Heart right ventricle (tissue), 16 donors: ENCODE measurements at regions of chr11 and their contacts with region 1.

Region 1: DNA sequence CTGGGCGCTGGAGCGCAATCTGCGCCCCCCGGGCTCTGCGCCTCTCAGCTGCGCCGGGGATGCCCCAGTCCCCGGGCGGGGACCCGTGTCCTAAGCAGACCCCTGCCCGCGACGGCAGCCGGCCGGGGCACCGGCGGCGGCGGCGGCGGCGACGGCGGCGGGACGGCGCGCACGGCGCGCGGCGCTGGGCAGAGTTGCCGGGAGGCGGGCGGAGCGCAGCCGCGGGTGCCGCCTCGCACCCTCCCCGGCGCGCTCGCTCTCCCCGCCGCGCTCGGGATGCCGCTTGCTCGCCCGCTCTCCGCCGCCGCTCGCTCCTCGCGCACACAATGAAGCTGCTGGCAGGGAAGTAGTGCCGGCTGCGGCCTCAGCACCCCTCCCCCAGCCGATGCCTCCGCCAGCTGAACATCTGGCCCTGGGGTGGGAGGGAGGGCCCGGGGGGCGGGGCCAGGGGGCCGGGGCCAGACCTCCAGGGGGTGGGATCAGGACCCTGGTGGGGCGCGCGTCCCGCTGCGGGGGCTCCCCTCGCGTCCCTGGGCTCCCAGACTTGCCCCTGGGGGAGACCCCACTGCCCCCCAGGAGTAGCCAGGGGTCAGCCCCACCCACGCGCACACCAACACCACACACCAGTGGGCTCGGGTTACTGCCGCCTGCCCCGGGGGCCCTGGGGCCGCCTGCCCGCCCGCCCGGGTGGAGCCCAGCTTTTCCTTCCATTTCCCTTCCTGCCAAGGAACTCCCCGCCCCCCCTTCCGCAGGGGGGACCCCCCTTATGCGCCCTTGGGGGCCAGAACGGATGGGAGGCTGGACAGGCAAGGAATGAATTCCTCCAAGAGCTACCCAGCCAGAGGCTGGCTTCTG is at the start of gene RCOR2:
- DNase-seq: peak; percentile 83 to 86
- ATAC-seq: peak; percentile 24 to 50 (median 38)
- H3K4me3 ChIP-seq: peak within 1 kb of the TSS; percentile 39 to 67 (median 60)
- H3K27ac ChIP-seq: peak within 1 kb of the TSS; percentile 83 to 97 (median 94)
- H3K4me1 ChIP-seq: peaks cover 39 to 61% (median 54%) of the 10 kb centered on the region in 9 donors
- H3K27me3 ChIP-seq: peaks cover 0 to 47% (median 0%) of the 10 kb centered on the region in 7 donors
- CTCF ChIP-seq: no peak
- total RNA-seq, gene RCOR2: 1.1 to 8.4 (median 5.0) TPM

Region 2: DNA sequence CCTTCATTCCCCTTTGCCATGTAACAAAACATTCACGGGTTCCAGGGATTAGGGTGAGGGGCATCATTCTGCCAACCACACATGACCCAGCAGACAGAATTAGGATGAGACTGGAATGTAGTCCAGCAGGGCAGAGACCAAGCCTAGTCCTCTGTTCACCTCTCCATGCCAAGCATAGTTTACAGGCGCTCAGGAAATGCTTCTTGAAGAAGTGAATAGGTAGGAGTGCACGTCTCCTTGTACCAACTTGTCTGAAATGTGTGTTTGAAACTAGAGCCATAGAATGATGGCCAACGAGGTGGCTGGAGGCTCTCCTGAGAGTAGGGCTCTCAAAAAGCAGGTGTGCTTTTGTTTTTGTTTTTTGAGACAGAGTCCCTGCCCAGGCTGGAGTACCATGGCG is 95.7 kb before region 1 on chr11:
- intact Hi-C with region 1: no loop called
- DNase-seq: no peak
- ATAC-seq: no peak
- H3K4me3 ChIP-seq: no peak overlapping the region
- H3K27ac ChIP-seq: no peak overlapping the region
- H3K4me1 ChIP-seq: peaks cover 0 to 4% (median 0%) of the 10 kb centered on the region in 9 donors
- H3K27me3 ChIP-seq: no peaks in the 10 kb centered on the region
- CTCF ChIP-seq: no peak

Region 3: DNA sequence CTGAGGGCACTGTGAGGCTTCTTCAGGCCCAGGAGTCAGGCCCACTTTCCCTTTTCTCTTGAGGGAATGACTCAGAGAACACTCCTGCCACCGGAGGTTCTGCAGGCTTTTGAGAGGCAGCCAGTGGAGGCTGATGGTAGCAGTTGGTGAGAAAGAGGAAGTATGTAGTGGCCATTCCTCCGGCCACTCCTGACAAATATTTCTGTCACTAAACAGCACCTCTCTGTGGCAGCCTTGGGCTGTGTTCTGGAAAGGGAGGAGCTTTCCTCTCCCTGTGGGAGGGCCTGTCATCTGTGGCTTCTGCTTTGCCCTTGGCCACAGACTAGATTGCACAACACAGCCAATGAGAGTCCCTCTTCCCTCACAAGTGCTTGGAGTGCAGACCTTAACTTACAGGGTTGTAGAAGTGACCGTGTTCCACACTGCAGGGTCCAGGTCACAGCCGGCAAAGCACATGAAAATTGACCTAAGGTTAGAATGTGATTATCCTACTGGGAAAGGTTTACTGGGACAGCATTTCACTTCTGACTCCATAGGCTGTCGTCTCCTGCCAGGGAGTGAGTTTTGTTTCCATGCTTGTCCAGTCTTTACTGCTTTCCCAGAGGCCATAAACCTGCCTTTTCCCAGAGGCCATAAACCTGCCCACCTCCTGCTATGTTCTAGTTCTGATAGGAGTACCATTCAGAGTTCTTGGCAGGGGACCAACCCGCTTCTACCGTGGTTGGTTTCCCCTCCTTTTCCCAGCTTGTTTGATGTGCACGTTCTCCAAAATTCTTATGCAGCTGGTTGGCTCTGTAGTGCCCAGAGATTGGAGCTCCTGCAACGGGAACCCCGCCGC is 44.9 kb before region 1 on chr11:
- intact Hi-C with region 1: loop called in 2 of 10 experiments (anchors 2 to 5 kb)
- DNase-seq: peak; percentile 55 to 89
- ATAC-seq: peak; percentile 92 to 97 (median 96)
- H3K4me3 ChIP-seq: peak overlapping the region in 4 of 10 donors; percentile 5 to 27 (median 12)
- H3K27ac ChIP-seq: peak overlapping the region; percentile 25 to 90 (median 79)
- H3K4me1 ChIP-seq: peaks cover 35 to 97% (median 88%) of the 10 kb centered on the region in 9 donors
- H3K27me3 ChIP-seq: no peaks in the 10 kb centered on the region
- CTCF ChIP-seq: peak in 8 of 9 donors; percentile 30 to 78 (median 56)

Region 4: DNA sequence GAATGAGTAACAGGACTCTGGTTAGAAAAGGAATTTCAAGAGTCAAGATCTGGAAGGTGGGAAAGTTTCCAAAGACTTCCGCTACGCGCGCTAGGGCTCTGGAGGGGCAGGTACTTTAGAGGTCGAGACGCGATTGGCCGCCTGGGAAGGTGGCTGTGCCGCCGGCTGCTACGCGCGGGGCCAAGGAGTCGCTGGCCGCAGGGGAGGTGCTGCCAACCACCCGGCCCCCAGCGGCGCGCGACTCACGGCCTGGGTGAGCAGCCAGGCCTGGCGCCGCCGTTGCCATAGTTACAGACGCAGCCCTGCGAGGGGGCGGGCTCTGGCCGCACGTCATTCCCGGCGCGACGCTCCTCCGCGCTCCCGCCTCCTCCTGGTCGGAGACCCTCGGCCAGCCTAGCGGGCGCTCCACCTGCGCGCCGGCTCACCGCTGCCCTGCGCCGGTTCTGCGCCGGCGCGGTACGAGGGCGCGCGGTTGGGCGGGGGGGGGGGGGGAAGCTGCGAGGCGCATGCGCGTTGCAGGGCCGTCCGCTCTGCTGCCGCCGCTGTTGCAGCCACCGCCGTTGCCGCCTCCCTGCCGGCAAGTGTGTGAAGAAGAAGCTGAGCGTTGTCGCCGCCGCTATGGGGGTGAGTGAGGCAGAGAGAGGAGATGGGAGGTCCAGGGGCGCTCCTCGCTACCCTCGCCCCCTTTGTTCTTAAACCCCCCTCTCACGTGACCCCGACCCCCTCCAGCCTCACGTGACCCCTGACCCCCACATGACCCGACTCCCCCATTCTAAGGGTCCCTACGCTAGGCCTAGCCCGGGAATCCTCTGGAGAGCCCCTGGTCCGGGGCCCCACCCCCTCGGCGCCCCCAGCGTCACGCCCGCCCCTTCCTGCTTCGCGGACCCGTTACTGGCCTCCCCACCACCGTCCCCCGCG is 21.7 kb after region 1 on chr11 and contains the start of gene NAA40:
- intact Hi-C with region 1: loop called in 2 of 10 experiments (anchors 2 kb)
- DNase-seq: peak; percentile 86 to 91
- ATAC-seq: peak; percentile 93 to 96 (median 95)
- H3K4me3 ChIP-seq: peak within 1 kb of the TSS; percentile 53 to 92 (median 72)
- H3K27ac ChIP-seq: peak within 1 kb of the TSS; percentile 49 to 83 (median 75)
- H3K4me1 ChIP-seq: peaks cover 0 to 38% (median 23%) of the 10 kb centered on the region in 9 donors
- H3K27me3 ChIP-seq: no peaks in the 10 kb centered on the region
- CTCF ChIP-seq: peak in 5 of 9 donors; percentile 6 to 26 (median 12)
- total RNA-seq, gene NAA40: 13.0 to 26.4 (median 19.7) TPM

Region 5: GRCh38 chr11:63945477-63946163 is 28.6 kb after region 1 on chr11:
- intact Hi-C with region 1: loop called in 1 of 10 experiments (anchors 2 kb)
- DNase-seq: peak; percentile 46 to 77
- ATAC-seq: peak; percentile 79 to 94 (median 85)
- H3K4me3 ChIP-seq: peak overlapping the region in 7 of 10 donors; percentile 13 to 41 (median 30)
- H3K27ac ChIP-seq: peak overlapping the region; percentile 20 to 79 (median 72)
- H3K4me1 ChIP-seq: peaks cover 8 to 44% (median 21%) of the 10 kb centered on the region in 9 donors
- H3K27me3 ChIP-seq: no peaks in the 10 kb centered on the region
- CTCF ChIP-seq: peak; percentile 58 to 88 (median 80)